K562 (cell line): ENCODE measurements at regions of chr14 and their contacts with region 1.

Region 1: GRCh38 chr14:76514613-76515012 is 138.7 kb downstream of the ESRRB start:
- DNase-seq: peak; percentile 40 to 45 (median 43)
- ATAC-seq: peak; percentile 80
- H3K4me3 ChIP-seq: no peak overlapping the region
- H3K27ac ChIP-seq: no peak overlapping the region
- H3K4me1 ChIP-seq: no peaks in the 10 kb centered on the region
- H3K27me3 ChIP-seq: peaks cover 5 to 40% of the 10 kb centered on the region in 2 experiments; a peak in 3 of 5 replicates
- CTCF ChIP-seq: peak; percentile 40 to 53 (median 49); a peak in 5 of 6 replicates
- EP300 ChIP-seq: no peak
- POLR2A ChIP-seq: no peak
- RAD21 ChIP-seq: peak in 1 of 2 experiments; percentile 37; a peak in 2 of 4 replicates

Region 2: GRCh38 chr14:76546426-76547221 is 32.0 kb after region 1 on chr14:
- CTCF ChIA-PET with region 1: no interaction called
- POLR2A ChIA-PET with region 1: no interaction called
- in situ Hi-C with region 1: no loop called
- intact Hi-C with region 1: loop called (anchors 5 kb)
- DNase-seq: peak; percentile 50 to 62 (median 58)
- ATAC-seq: peak; percentile 88
- H3K4me3 ChIP-seq: no peak overlapping the region
- H3K27ac ChIP-seq: no peak overlapping the region
- H3K4me1 ChIP-seq: no peaks in the 10 kb centered on the region
- H3K27me3 ChIP-seq: peaks cover 2 to 30% of the 10 kb centered on the region in 2 experiments; a peak in 3 of 5 replicates
- CTCF ChIP-seq: peak; percentile 60 to 86 (median 69)
- EP300 ChIP-seq: no peak
- POLR2A ChIP-seq: no peak
- RAD21 ChIP-seq: peak in 1 of 2 experiments; percentile 67; a peak in 2 of 4 replicates

Region 3: DNA sequence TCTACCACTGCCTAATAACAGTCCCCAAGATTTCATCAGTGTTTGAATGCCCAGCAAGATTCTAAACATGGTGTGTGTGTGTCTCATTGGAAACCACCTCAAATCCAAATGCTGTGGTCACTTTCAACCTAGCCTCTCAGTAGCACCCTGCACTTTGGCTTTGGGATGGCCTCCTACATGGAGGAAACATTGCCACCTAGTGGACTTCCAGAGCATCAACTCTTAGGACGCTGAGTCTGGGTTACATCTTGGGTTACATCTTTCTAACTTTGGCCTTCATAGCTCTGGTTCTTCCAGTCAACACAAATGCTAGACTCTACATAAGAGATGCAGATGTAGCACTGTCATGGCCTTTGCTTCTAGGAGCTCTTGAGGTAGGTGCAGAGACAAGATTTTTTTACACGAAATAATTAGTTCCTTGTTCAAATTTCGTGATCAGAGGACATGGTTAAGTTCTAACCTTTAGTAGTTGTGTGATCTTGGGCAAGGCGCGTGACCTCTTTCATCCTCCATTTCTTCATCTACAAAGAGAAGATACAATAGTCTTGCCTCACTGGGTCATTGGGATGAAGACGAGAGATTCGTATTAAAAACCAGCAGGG is 133.2 kb after region 1 on chr14:
- CTCF ChIA-PET with region 1: no interaction called
- POLR2A ChIA-PET with region 1: no interaction called
- in situ Hi-C with region 1: no loop called
- intact Hi-C with region 1: loop called (anchors 1 kb)
- DNase-seq: peak; percentile 53 to 61 (median 54)
- ATAC-seq: peak; percentile 93
- H3K4me3 ChIP-seq: no peak overlapping the region
- H3K27ac ChIP-seq: no peak overlapping the region
- H3K4me1 ChIP-seq: no peaks in the 10 kb centered on the region
- H3K27me3 ChIP-seq: peaks cover 6 to 31% of the 10 kb centered on the region in 2 experiments; a peak in 3 of 5 replicates
- CTCF ChIP-seq: peak; percentile 69 to 71 (median 70)
- EP300 ChIP-seq: no peak
- POLR2A ChIP-seq: no peak
- RAD21 ChIP-seq: peak; percentile 27 to 71; a peak in 3 of 4 replicates